Adrenal gland (tissue), 19 donors: ENCODE measurements at regions of chr3 and their contacts with region 1.

Region 1: GRCh38 chr3:134373994-134374790 is at the start of gene AMOTL2:
- DNase-seq: peak; percentile 77 to 93 (median 91)
- H3K4me3 ChIP-seq: peak within 1 kb of the TSS; percentile 29 to 85 (median 66)
- H3K27ac ChIP-seq: peak within 1 kb of the TSS; percentile 63 to 98 (median 94)
- H3K4me1 ChIP-seq: peaks cover 33 to 40% of the 10 kb centered on the region in 2 donors
- H3K27me3 ChIP-seq: no peaks in the 10 kb centered on the region
- CTCF ChIP-seq: no peak
- POLR2A ChIP-seq: peak; percentile 96 to 98
- total RNA-seq, gene AMOTL2: 9.3 to 63.0 (median 32.4) TPM

Region 2: DNA sequence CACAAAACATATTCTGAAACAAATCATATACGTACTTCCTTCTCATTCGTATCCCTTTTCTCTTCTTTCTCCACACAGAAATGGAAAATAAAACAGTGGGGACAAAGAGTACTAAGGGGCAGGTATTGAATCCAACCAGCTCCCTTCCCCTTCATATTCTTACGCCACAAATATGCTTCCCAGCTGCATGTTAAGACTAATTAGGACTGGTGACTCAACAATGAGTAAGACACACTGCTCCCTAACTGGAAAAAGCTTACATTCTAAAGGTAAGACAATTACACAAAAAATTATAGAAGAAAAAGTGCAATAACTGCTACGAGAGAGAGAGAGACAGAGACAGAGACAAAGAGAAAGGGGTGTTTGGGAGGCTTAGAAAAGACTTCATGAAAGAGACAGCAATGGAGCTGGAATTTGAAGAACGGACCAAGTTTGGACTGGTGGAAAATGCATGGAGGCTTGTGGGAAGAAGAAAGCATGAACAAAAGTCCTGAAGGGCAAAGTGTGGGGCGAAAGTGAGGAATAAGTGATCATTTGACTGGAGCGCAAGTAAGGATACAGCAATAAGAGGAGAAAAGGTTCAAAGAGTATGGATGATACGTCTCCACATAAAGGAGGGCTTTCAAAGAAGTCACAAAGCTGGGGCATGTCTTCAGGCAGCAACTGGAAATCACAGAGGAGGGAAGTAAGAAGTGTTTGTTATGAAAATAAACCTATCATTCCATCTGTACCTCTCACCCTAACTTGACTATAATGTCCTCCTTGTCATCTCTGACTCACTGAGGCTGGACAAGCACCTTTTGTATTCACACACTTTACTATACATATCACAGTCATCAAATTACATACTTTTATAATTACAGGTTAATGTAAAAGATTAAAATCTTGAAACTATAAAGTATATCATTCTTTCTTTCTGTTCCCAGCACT is 172.7 kb before region 1 on chr3:
- intact Hi-C with region 1: loop called in 1 of 2 experiments (anchors 10 kb)
- DNase-seq: no peak
- H3K4me3 ChIP-seq: no peak overlapping the region
- H3K27ac ChIP-seq: no peak overlapping the region
- H3K4me1 ChIP-seq: no peaks in the 10 kb centered on the region
- H3K27me3 ChIP-seq: no peaks in the 10 kb centered on the region
- CTCF ChIP-seq: no peak
- POLR2A ChIP-seq: no peak

Region 3: GRCh38 chr3:134308350-134308891 is 65.8 kb before region 1 on chr3:
- intact Hi-C with region 1: loop called (anchors 2 to 5 kb)
- DNase-seq: peak; percentile 69 to 94 (median 85)
- H3K4me3 ChIP-seq: no peak overlapping the region
- H3K27ac ChIP-seq: peak overlapping the region in 2 of 5 donors; percentile 48 to 83
- H3K4me1 ChIP-seq: peaks cover under 1 to 16% of the 10 kb centered on the region in 2 donors
- H3K27me3 ChIP-seq: no peaks in the 10 kb centered on the region
- CTCF ChIP-seq: peak; percentile 99 to 100 (median 100)
- POLR2A ChIP-seq: no peak

Region 4: GRCh38 chr3:134464064-134464697 is 90.0 kb after region 1 on chr3:
- intact Hi-C with region 1: loop called in 1 of 2 experiments (anchors 5 kb)
- DNase-seq: peak in 6 of 7 donors; percentile 30 to 83 (median 50)
- H3K4me3 ChIP-seq: no peak overlapping the region
- H3K27ac ChIP-seq: peak overlapping the region in 3 of 5 donors; percentile 39 to 85 (median 67)
- H3K4me1 ChIP-seq: peaks cover 0 to 20% of the 10 kb centered on the region in 2 donors
- H3K27me3 ChIP-seq: no peaks in the 10 kb centered on the region
- CTCF ChIP-seq: no peak
- POLR2A ChIP-seq: no peak